Ascending aorta (tissue), 2 donors: ENCODE measurements at regions of chr6 and their contacts with region 1.

Region 1: GRCh38 chr6:1901556-1901955 is 291.8 kb downstream of the FOXC1 start:
- DNase-seq: no peak
- H3K4me3 ChIP-seq: no peak overlapping the region
- H3K27ac ChIP-seq: peak overlapping the region; percentile 86 to 93
- H3K4me1 ChIP-seq: peaks cover 18 to 37% of the 10 kb centered on the region in 2 donors
- H3K27me3 ChIP-seq: no peaks in the 10 kb centered on the region
- CTCF ChIP-seq: no peak

Region 2: GRCh38 chr6:1609648-1610496 is 291.7 kb before region 1 on chr6 and contains the start of gene FOXC1:
- intact Hi-C with region 1: loop called (anchors 5 kb)
- DNase-seq: peak; percentile 80 to 98
- H3K4me3 ChIP-seq: peak within 1 kb of the TSS; percentile 91 to 94
- H3K27ac ChIP-seq: peak within 1 kb of the TSS; percentile 99 to 100
- H3K4me1 ChIP-seq: no peaks in the 10 kb centered on the region
- H3K27me3 ChIP-seq: no peaks in the 10 kb centered on the region
- CTCF ChIP-seq: no peak
- total RNA-seq, gene FOXC1: 125 TPM

Region 3: GRCh38 chr6:1695546-1696462 is 205.8 kb before region 1 on chr6:
- intact Hi-C with region 1: loop called (anchors 5 kb)
- DNase-seq: peak in 1 of 2 donors; percentile 86
- H3K4me3 ChIP-seq: peak overlapping the region in 1 of 2 donors; percentile 32
- H3K27ac ChIP-seq: peak overlapping the region; percentile 84 to 87
- H3K4me1 ChIP-seq: peaks cover 15 to 41% of the 10 kb centered on the region in 2 donors
- H3K27me3 ChIP-seq: no peaks in the 10 kb centered on the region
- CTCF ChIP-seq: no peak

Region 4: GRCh38 chr6:1872649-1873131 is 28.9 kb before region 1 on chr6:
- intact Hi-C with region 1: no loop called
- DNase-seq: no peak
- H3K4me3 ChIP-seq: peak overlapping the region; percentile 15 to 54
- H3K27ac ChIP-seq: peak overlapping the region; percentile 82 to 85
- H3K4me1 ChIP-seq: peaks cover 4 to 17% of the 10 kb centered on the region in 2 donors
- H3K27me3 ChIP-seq: no peaks in the 10 kb centered on the region
- CTCF ChIP-seq: no peak

Region 5: DNA sequence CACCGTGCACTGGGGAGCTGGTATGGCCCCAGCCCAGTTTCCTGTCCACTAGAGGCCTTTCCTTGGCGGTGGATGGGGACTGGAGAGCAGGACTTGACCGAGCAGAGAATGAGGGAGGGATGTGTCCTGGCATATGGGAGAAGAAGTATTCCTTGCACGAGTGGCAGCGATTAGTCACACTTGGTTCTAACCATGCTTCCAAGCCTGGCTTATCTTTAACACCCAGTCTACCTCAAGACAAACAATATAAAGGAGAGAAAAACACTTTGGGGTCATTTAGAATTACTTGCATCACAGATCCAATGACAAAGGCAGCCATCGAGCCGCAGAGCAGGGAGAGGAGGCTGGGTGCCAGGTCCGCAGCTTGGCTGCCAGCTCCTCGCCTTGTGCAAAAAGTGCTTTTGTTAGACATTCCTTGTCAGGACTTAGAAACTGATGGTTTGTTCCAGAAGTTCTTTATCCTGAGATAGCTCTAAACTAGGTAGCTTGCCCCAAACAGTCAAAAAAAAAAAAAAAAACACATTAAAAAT is 558.7 kb after region 1 on chr6:
- intact Hi-C with region 1: no loop called
- DNase-seq: no peak
- H3K4me3 ChIP-seq: no peak overlapping the region
- H3K27ac ChIP-seq: peak overlapping the region in 1 of 2 donors; percentile 12
- H3K4me1 ChIP-seq: no peaks in the 10 kb centered on the region
- H3K27me3 ChIP-seq: no peaks in the 10 kb centered on the region
- CTCF ChIP-seq: no peak